Activated T-helper 2 cell treated with anti-CD3 and anti-CD28 coated beads, Interferon-gamma antibody, Interleukin-2, Interleukin-4, amounts not matched to agents 10 μg/mL and 5 μg/mL and 100 μg/mL, durations not matched to agents 14 hours and 24 hours and 36 hours (primary cell): ENCODE measurements at regions of chr6 and their contacts with region 1.

Region 1: GRCh38 chr6:156564127-156564806 is 212.9 kb upstream of the ARID1B start:
- DNase-seq: peak; percentile 61
- H3K4me3 Mint-ChIP-seq: no peak overlapping the region
- H3K27ac Mint-ChIP-seq: no peak overlapping the region
- H3K4me1 Mint-ChIP-seq: peaks cover 7% of the 10 kb centered on the region
- H3K27me3 Mint-ChIP-seq: peaks cover 5% of the 10 kb centered on the region

Region 2: DNA sequence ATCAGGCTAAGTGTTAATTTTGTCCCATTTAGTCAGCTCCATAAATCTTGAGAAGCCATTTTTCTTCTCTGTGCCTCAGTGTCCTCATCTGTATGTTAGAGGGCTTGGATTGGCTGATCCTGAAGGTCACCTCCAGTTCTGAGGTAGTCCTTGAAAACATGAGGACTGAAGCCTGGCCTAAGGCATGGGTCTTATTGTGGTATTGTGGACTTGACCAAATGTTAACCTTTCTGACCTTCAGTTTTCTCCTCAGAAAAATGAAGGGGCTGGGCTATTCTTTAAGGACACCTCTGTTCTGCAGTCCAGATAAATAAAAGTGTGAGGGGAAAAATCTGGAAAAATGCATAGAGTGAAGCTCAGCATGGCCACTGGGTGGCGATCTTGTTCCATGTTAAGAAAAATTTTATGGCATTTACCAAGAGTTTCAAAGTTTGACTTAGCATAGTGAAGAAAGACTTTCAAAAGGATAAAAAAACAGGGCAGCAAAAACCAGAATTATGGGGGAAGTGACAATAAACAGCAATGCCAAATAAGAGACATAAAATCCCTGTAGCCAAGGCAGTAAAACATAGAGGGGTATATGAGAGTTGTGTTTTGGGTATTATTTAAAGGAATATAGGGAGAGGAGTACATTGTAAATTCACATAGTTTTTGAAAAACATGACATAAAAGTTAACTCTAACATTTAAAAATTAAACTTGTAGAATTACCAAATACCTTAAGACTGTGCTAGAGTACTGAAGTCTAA is 1236.8 kb before region 1 on chr6:
- intact Hi-C with region 1: loop called (anchors 5 kb)
- DNase-seq: peak; percentile 21
- H3K4me3 Mint-ChIP-seq: no peak overlapping the region
- H3K27ac Mint-ChIP-seq: peak overlapping the region; percentile 14
- H3K4me1 Mint-ChIP-seq: peaks cover 18% of the 10 kb centered on the region
- H3K27me3 Mint-ChIP-seq: no peaks in the 10 kb centered on the region

Region 3: DNA sequence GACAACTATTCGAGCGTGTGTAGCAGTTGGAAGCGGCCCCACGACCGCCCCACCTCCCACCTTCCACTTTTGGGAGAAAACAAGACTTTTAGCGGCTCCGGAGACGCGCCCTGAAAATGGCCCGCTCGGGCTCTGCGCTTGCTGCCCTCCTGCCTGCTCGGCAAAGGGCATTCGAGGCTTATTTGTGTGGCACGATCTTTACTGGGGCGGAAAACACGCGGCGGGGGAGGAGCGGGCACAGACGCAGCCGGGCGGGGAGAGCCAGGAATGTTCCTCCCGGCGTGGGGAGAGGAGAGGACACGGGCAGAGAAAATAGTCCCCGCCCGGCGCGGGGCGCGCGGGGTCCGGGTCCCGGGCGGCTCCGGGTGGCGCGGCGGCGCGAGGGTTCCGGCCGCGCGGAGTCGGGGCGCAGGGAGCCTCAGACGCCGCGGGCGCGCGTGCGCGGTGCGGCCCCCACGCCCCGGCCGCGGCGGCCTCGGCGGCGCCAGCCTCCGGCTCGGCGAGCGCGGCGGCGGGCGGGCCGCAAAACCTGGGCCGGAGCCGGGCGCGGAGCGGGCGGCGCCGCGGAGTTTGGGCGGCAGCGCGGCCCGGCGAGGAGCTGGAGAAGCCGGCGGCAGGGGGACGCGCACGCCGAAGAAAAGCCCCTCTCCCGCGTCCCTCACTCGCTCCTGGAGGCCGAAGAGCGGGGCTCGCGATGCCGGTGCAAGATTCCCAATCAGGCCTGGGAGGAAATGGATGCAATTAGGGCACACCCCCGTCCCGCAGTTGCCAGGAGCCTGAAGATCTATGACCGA is 122.9 kb after region 1 on chr6:
- intact Hi-C with region 1: loop called (anchors 10 kb)
- DNase-seq: peak; percentile 75
- H3K4me3 Mint-ChIP-seq: peak overlapping the region; percentile 84
- H3K27ac Mint-ChIP-seq: peak overlapping the region; percentile 73
- H3K4me1 Mint-ChIP-seq: peaks cover 29% of the 10 kb centered on the region
- H3K27me3 Mint-ChIP-seq: peaks cover 24% of the 10 kb centered on the region

Region 4: DNA sequence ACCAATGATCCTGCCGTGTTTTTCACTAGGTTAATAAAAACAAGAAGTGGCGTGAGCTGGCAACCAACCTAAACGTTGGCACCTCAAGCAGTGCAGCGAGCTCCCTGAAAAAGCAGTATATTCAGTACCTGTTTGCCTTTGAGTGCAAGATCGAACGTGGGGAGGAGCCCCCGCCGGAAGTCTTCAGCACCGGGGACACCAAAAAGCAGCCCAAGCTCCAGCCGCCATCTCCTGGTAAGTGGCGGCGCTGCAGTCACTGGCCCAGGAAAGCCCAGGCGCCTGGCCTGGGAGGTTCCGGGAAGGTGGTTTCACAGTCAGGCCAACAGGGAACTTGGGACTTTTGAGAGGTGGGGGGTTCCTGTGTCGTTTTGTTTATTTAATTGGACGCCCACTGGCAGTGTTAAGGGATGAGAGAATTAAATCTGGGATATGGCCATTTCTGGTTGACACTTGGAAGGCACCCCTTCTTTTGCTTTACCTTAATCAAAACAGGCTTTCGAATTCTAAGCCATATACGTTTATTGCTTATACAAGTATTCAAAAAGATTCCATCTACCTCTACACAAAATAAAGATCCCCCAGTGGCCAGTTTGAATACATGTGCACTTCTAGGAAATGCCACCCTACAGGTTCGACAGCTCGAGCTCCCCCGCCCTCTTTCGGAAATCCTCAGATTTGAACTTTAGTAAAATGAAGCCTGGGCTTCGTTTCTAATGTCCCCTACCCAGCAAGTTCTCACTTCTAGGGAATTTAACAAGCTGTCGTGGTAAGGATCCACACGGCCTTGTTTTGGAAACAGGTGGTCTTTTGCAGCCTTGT is 620.1 kb after region 1 on chr6:
- intact Hi-C with region 1: loop called (anchors 1 kb)
- DNase-seq: peak; percentile 46
- H3K4me3 Mint-ChIP-seq: no peak overlapping the region
- H3K27ac Mint-ChIP-seq: peak overlapping the region; percentile 21
- H3K4me1 Mint-ChIP-seq: peaks cover 6% of the 10 kb centered on the region
- H3K27me3 Mint-ChIP-seq: no peaks in the 10 kb centered on the region